GM10248 (cell line): ENCODE measurements at regions of chr10 and their contacts with region 1.

Region 1: DNA sequence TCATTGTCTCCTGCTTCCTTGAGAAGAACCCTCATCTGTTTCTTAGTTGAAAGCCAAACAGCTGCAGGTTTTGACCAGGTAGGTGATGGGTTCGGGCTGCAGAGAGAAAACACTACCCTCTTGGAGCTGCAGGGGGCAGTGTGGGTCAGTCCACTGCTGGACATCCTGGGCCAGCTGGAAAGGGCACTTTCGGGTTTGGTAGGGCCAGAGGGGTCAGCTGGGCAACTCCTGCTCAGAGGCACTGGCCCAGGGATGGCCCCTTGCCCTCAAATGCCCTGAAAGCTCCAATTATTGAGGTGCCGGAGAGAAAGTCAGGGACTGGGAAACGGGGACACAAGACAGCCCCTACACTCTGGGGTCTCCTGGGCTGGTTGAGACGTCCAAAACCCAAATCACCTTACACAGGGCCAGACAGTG is 90.7 kb downstream of the MKI67 start:
- DNase-seq: peak; percentile 73
- CTCF ChIP-seq: peak; percentile 68

Region 2: GRCh38 chr10:127976701-127977356 is 58.7 kb before region 1 on chr10:
- CTCF ChIA-PET with region 1: no interaction called
- POLR2A ChIA-PET with region 1: no interaction called
- DNase-seq: no peak
- CTCF ChIP-seq: no peak

Region 3: GRCh38 chr10:128018691-128019090 is 16.9 kb before region 1 on chr10:
- CTCF ChIA-PET with region 1: interaction called, 23 read pairs
- POLR2A ChIA-PET with region 1: no interaction called
- DNase-seq: no peak
- CTCF ChIP-seq: no peak

Region 4: GRCh38 chr10:128054163-128054970 is 18.8 kb after region 1 on chr10:
- CTCF ChIA-PET with region 1: interaction called, 132 read pairs
- POLR2A ChIA-PET with region 1: no interaction called
- DNase-seq: no peak
- CTCF ChIP-seq: no peak

Region 5: DNA sequence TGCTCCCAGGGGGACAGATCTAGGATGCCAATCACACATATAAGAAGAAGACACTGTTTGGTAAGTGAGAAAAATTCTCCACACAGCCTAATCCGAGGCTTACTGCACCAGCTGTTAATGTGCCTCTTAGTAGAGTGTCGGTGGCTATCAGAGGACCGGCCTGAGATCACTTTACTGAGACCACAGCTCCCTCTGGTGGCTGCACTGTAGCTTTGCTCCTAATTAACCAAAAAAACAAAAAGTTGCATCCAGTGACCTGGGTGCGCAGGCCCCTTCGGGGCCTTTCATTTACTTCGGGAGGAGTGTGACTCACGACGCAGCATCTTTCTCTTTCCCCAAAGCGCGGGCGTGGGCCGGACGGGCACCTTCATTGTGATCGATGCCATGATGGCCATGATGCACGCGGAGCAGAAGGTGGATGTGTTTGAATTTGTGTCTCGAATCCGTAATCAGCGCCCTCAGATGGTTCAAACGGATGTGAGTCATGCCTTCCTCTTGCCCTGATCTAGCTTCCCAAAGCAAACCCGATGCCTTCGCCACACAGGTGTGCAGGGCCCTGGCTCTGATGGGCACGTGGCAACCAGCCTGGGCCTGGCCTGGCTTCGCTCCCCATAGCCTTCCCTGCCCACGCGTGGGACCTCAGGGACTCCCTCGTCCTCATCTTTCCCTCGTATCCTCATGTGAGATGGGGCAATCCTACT is 33.9 kb after region 1 on chr10:
- CTCF ChIA-PET with region 1: interaction called, 335 read pairs
- POLR2A ChIA-PET with region 1: no interaction called
- DNase-seq: peak; percentile 83
- CTCF ChIP-seq: peak; percentile 78

Region 6: DNA sequence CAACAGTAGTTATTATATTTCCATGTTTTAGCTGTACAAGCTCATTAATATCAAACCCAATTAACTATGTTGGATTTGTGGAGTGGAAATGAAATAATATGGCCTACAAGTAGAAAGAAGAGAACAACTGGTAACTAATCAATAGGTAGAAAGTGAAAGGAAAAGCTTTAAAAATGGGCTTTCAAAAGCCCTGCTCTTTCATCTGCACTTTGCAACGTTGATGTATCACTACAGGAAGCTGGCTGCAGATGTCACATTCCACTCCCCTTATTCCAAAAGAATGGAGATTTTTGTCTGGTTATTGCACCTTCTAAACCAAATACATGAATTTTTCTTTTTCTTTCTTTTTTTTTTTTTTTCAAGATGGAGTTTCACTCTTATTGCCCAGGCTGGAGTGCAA is 102.3 kb after region 1 on chr10:
- CTCF ChIA-PET with region 1: interaction called, 10 read pairs
- POLR2A ChIA-PET with region 1: no interaction called
- DNase-seq: no peak
- CTCF ChIP-seq: no peak

Region 7: GRCh38 chr10:128230401-128230800 is 194.8 kb after region 1 on chr10:
- CTCF ChIA-PET with region 1: no interaction called
- POLR2A ChIA-PET with region 1: no interaction called
- DNase-seq: no peak
- CTCF ChIP-seq: no peak